ENCODE measurements at regions of chr19 and their contacts with region 1.

Region 1: GRCh38 chr19:58362272-58362994 is at the start of gene ZNF497:
- DNase-seq: peak; percentile 95
- H3K4me3 Mint-ChIP-seq: peak within 1 kb of the TSS; percentile 94
- H3K27ac Mint-ChIP-seq: peak within 1 kb of the TSS; percentile 95
- H3K4me1 Mint-ChIP-seq: peaks cover 7% of the 10 kb centered on the region
- H3K27me3 Mint-ChIP-seq: no peaks in the 10 kb centered on the region
- total RNA-seq, gene ZNF497: 0.76 and 0.93 TPM in 2 replicates

Region 2: GRCh38 chr19:57934820-57935665 is 427.4 kb before region 1 on chr19 and contains the start of gene ZNF418:
- intact Hi-C with region 1: no loop called
- DNase-seq: peak; percentile 8
- H3K4me3 Mint-ChIP-seq: peak within 1 kb of the TSS; percentile 81
- H3K27ac Mint-ChIP-seq: peak within 1 kb of the TSS; percentile 7
- H3K4me1 Mint-ChIP-seq: no peaks in the 10 kb centered on the region
- H3K27me3 Mint-ChIP-seq: no peaks in the 10 kb centered on the region
- total RNA-seq, gene ZNF418: 0.70 and 3.6 TPM in 2 replicates

Region 3: GRCh38 chr19:58346961-58347931 is 15.2 kb before region 1 on chr19:
- intact Hi-C with region 1: loop called (anchors 1 kb)
- DNase-seq: peak; percentile 63
- H3K4me3 Mint-ChIP-seq: peak overlapping the region; percentile 92
- H3K27ac Mint-ChIP-seq: peak overlapping the region; percentile 83
- H3K4me1 Mint-ChIP-seq: peaks cover 29% of the 10 kb centered on the region
- H3K27me3 Mint-ChIP-seq: no peaks in the 10 kb centered on the region

Region 4: GRCh38 chr19:58386576-58387337 is 24.3 kb after region 1 on chr19 and contains the start of gene RPS5:
- intact Hi-C with region 1: loop called (anchors 1 kb)
- DNase-seq: peak; percentile 95
- H3K4me3 Mint-ChIP-seq: peak within 1 kb of the TSS; percentile 93
- H3K27ac Mint-ChIP-seq: peak within 1 kb of the TSS; percentile 99
- H3K4me1 Mint-ChIP-seq: peaks cover 35% of the 10 kb centered on the region
- H3K27me3 Mint-ChIP-seq: no peaks in the 10 kb centered on the region
- total RNA-seq, gene RPS5: 1,157 and 1,161 TPM in 2 replicates